ENCODE measurements at regions of chr1 and their contacts with region 1.

Region 1: DNA sequence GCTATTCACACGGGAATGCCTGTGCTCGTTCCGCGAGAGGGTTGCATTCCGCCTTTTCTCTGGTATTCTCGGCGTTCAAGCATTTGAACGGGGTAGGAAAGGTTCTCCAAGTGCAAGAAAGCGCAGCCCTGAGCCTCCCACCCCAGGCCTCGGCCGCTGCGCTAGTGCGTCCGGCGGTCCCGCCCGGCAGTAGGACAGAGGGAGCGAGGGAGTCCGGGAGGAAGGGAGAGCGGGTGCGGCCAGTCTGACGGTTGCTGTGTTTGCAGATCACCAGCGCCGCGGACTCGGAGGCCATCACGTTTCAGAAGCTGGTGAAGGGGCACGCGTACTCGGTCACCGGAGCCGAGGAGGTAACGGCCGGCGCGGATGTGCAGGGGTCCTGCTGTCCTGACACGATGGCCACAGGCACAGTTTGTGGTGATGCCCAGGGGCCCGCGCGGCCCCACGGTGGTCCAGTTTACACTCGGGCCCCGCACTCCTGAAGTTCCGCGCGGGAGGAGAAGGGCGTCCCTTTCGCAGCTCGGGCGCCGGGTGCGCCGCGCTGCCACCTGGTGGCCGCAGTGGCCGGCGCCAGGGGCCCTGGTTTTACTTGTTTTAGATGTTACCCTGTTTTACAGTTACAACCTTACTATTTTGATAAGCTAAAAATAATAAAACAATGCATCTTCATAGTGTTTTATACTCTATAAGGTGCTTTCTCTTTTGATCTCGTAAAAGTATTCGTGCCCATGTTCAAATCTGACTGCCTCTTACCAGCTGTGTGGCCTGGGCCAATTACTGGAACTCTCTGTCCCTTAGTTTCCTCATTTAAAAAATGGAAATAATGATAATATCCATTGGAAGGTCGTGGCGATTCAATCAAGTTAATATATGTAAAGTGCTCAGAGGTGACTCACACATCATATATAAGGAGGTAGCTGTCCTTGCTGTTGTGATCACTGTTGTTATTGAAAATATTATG is 36.7 kb downstream of the CAPN2 start:
- DNase-seq: peak in 9 of 10 donors; percentile 48 to 83 (median 62)
- H3K4me3 ChIP-seq: peak overlapping the region; percentile 33 to 73 (median 60)
- H3K27ac ChIP-seq: peak overlapping the region in 56 of 59 donors; percentile 22 to 87 (median 74)
- H3K27me3 ChIP-seq: no peaks in the 10 kb centered on the region
- CTCF ChIP-seq: peak; percentile 90 to 100 (median 98)

Region 2: DNA sequence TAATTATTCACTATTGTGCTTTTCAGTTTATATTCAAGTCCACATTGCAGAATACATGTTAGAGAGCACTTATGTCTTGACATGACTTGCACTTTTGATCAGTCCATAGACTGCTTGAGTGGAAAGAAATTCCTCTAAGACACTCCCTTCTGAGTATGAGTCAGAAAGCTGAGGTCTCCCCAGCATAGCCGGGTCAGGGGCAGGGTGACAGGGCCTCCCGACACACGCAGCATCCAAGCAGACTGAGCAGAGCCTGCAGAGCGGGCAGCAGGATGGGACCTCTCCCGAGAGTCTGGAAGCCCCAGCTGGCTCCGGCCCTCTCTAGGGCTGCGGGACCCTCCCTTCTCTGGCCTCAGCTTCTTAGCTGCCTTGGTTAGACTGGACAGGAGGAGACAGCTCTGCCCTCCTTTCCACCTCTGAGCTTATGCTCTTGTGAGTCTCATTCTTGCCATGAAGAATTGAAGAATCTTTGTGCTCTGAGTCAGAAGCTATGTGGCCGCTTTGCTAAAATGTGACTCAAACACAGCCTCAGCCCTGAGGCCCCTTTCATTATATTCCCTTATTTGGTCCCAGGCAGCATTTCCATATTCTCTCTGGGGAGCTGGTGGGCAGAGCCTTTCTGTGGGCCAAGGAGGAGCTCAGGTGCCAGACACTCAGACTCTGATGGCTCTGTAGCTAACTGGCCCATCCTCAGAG is 48.0 kb before region 1 on chr1:
- intact Hi-C with region 1: loop called in 1 of 2 experiments (anchors 2 kb)
- DNase-seq: no peak
- H3K4me3 ChIP-seq: no peak overlapping the region
- H3K27ac ChIP-seq: peak overlapping the region in 7 of 59 donors; percentile 4 to 67 (median 55)
- H3K27me3 ChIP-seq: no peaks in the 10 kb centered on the region
- CTCF ChIP-seq: no peak

Measured in dorsolateral prefrontal cortex (tissue), 120 donors.